Lower leg skin (tissue), 4 donors: ENCODE measurements at regions of chr1 and their contacts with region 1.

Region 1: DNA sequence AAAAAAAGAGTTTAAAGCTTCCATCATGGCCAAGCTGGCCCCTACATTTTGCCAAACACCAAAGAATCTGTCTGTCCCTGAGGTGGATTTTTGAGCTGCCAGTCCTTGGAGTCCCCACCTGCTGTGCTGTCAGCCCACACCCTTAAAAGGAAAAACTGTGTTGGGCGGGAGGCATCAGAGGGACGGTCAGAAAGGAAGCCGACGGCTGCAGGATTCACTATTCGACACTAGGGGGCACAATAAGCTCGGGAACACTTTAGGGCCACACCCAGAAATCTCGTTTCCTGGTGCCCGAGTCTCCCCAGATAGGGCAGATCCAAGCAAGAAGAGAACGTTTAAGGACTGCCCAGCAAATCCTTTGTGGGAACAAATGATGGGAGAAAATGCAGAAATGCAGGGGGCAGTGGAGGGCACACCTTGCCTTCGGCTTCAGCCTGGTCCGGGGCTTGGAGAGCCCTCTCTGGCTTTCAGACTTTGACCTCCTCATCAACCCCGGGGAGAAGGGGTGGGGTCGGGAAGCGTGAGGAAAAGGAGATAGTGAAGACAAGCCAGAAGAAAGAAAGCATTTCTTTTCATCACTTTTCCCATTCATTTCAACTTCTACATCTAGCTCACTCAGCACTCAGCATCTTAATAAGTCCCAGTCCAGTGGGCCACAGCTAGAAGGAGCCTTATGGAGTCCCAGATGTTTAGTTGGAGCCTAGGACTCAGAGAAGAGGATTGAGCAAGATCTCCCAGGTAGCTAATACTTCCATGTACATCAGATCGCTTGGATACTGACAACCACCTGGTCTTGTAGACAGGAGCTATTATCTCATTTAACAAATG is 5.0 kb upstream of the CTTNBP2NL start:
- DNase-seq: peak; percentile 96 to 98
- H3K4me3 ChIP-seq: no peak overlapping the region
- CTCF ChIP-seq: peak in 2 of 3 donors; percentile 56 to 85
- POLR2A ChIP-seq: no peak

Region 2: GRCh38 chr1:112466078-112466660 is 75.2 kb after region 1 on chr1:
- intact Hi-C with region 1: loop called (anchors 2 kb)
- DNase-seq: peak; percentile 96 to 99
- H3K4me3 ChIP-seq: no peak overlapping the region
- CTCF ChIP-seq: peak in 1 of 3 donors; percentile 96
- POLR2A ChIP-seq: no peak

Region 3: DNA sequence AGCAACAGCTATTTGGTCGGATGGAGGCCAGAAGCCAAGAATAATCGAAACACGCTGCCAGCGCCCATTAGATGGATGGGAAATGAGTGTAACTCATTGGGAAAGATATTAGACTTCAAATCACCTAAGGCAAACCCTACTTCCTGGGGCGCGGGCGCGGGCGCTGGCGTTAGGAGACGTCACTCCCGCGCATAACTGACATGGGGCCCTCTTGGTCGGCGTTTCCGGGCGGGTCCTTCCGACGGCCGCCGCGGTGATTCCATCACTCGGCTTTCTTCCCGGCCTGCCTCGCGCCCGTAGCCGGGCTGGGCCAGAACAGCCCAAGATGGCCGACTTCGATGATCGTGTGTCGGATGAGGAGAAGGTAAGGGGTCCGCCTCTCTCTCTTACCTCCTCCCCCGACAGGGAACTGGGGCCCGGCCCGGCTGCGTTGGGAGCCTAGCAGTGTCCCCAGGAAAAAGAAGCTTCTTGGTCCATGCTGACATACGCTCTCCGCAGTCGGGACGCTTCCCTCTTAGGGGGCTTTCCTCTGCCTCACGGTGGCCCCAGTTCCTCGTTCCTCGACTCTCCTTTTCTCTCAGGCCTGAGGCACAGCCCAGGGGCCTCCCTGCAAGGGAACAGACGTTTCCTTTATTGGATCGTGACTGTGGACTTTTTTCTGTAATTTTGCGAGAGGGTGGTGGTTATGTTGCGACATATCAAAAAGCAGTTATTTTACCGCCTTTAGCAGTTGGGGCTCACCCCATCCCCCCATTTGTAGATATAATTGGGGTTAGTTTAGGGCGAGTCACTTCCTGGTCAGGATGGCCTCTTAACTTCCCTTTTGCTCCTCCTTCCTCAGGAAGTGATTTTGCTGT is 228.8 kb after region 1 on chr1 and contains the start of gene CAPZA1:
- intact Hi-C with region 1: loop called (anchors 10 kb)
- DNase-seq: peak; percentile 92 to 98
- H3K4me3 ChIP-seq: peak within 1 kb of the TSS; percentile 93
- CTCF ChIP-seq: no peak
- POLR2A ChIP-seq: peak in 1 of 2 donors; percentile 74
- total RNA-seq, gene CAPZA1: 110 to 170 (median 144) TPM

Region 4: DNA sequence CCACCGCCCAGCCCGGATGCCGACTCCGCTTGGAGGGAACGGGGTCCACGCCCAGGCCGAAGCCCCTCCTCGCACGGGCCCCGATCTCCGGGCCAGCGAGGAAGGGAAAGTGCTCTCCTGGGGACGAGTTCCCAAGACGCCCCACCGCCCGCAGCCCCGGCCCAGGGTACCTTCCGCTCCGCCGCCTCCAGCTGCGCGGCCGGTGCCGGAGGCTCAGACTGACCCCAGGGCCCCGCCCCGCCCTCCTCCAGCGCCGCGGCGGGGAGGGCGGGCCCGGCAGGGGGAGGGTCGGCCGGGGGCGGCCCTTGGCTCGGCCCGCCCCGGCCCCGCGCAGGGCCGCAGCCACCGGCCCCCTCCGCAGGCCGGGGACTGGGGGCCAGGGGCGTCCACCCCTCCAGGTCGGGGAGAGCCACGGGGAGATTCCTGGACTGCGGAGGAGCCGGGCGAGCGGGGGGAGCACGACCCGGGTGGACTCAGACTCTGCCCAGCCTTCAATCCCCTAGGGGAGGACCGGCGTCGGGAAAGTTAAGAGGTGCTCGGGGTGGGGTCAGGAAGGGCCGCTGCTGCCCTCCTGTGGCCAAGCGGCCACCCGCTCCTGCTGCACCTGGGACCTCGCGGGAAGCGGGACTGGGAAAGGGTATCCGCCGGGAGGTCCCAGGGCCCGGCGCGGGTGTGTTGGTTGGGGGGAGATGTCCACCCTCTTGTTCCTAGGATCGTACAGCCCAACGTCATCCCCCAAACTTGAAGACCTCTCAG is 316.1 kb after region 1 on chr1 and contains the start of gene RHOC:
- intact Hi-C with region 1: loop called (anchors 5 kb)
- DNase-seq: peak; percentile 83 to 97
- H3K4me3 ChIP-seq: peak within 1 kb of the TSS; percentile 90
- CTCF ChIP-seq: peak in 1 of 3 donors; percentile 77
- POLR2A ChIP-seq: no peak
- total RNA-seq, gene RHOC: 133 to 214 (median 184) TPM